ENCODE measurements at regions of chr15 and their contacts with region 1.

Region 1: GRCh38 chr15:49471733-49472132 is 48.7 kb downstream of the FGF7 start:
- DNase-seq: no peak
- H3K4me3 ChIP-seq: no peak overlapping the region
- H3K27ac ChIP-seq: no peak overlapping the region
- H3K4me1 ChIP-seq: no peaks in the 10 kb centered on the region
- H3K27me3 ChIP-seq: no peaks in the 10 kb centered on the region
- CTCF ChIP-seq: no peak
- POLR2A ChIP-seq: no peak

Region 2: DNA sequence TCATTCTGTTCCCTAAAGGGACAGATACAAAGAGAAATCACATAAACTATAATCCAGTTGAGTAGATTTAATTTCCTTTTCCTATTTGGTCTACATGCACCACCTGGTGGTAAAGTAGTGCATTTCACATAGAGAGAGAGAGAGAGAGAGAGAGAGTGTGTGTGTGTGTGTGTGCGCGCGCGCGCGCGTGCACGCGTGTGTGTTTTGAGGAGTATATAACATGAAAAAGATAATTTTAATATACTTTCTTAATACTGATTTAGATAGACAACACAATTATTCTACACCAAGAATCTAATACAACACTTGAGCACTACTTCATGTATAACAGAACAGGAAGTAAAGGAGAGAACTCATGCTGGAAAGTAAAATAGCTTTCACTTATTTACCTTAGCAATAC is 49.7 kb before region 1 on chr15:
- intact Hi-C with region 1: loop called (anchors 10 kb)
- DNase-seq: no peak
- H3K4me3 ChIP-seq: no peak overlapping the region
- H3K27ac ChIP-seq: no peak overlapping the region
- H3K4me1 ChIP-seq: no peaks in the 10 kb centered on the region
- H3K27me3 ChIP-seq: no peaks in the 10 kb centered on the region
- CTCF ChIP-seq: peak; percentile 44 to 89 (median 61)
- POLR2A ChIP-seq: no peak

Region 3: GRCh38 chr15:49610161-49610918 is 138.6 kb after region 1 on chr15:
- intact Hi-C with region 1: no loop called
- DNase-seq: no peak
- H3K4me3 ChIP-seq: no peak overlapping the region
- H3K27ac ChIP-seq: no peak overlapping the region
- H3K4me1 ChIP-seq: no peaks in the 10 kb centered on the region
- H3K27me3 ChIP-seq: no peaks in the 10 kb centered on the region
- CTCF ChIP-seq: no peak
- POLR2A ChIP-seq: no peak

Measured in prostate gland (tissue), 2 donors.